ENCODE measurements at regions of chr16 and their contacts with region 1.

Region 1: GRCh38 chr16:22117609-22118008 is 25.3 kb downstream of the VWA3A start:
- DNase-seq: no peak
- H3K4me3 Mint-ChIP-seq: no peak overlapping the region
- H3K27ac Mint-ChIP-seq: no peak overlapping the region
- H3K4me1 Mint-ChIP-seq: no peaks in the 10 kb centered on the region
- H3K27me3 Mint-ChIP-seq: peaks cover 22% of the 10 kb centered on the region
- CTCF ChIP-seq: no peak

Region 2: DNA sequence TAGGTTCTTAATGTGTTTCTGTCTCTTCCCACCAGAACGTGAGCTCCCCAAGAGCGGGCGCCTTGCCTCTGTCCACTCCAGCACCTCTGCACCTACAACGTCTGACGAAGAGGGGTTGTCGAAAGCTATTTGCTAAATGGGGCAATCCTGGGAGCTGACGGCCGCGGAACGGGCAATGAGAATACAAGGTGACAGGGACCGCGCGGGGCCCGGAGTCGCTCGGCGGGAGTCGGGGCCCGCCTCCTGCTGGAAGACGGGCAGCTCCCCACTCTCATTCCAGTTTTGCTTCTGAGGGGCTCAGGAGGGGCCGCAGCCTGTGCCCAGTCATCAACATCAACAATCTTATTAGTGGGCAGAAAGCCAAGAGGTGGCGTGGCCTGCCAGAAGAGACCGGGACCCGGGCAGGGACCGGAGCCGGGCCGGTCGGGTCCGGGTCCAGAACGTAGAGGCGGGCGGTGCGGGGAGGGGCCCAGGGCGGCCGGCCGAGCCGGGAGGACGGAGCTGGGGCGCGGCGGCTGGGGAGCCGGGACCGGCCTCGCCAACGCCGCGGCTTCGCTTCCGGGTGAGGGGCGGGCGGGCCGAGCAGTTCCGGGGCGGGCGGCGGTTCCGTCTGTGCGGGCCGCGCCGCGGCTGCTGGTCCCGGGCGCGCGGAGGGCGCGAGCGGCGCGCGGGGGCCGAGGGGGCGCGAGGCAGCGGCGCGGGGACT is 109.9 kb before region 1 on chr16 and contains the start of gene MOSMO:
- CTCF ChIA-PET with region 1: no interaction called
- POLR2A ChIA-PET with region 1: no interaction called
- intact Hi-C with region 1: no loop called
- DNase-seq: peak; percentile 74
- H3K4me3 Mint-ChIP-seq: peak within 1 kb of the TSS; percentile 90
- H3K27ac Mint-ChIP-seq: peak within 1 kb of the TSS; percentile 70
- H3K4me1 Mint-ChIP-seq: peaks cover 26% of the 10 kb centered on the region
- H3K27me3 Mint-ChIP-seq: no peaks in the 10 kb centered on the region
- CTCF ChIP-seq: no peak
- total RNA-seq, gene MOSMO: 16.4 and 17.1 TPM in 2 replicates

Region 3: GRCh38 chr16:22151246-22151998 is 33.8 kb after region 1 on chr16:
- CTCF ChIA-PET with region 1: no interaction called
- POLR2A ChIA-PET with region 1: no interaction called
- intact Hi-C with region 1: loop called (anchors 5 kb)
- DNase-seq: no peak
- H3K4me3 Mint-ChIP-seq: no peak overlapping the region
- H3K27ac Mint-ChIP-seq: no peak overlapping the region
- H3K4me1 Mint-ChIP-seq: peaks cover 5% of the 10 kb centered on the region
- H3K27me3 Mint-ChIP-seq: peaks cover 25% of the 10 kb centered on the region
- CTCF ChIP-seq: no peak

Measured in MCF 10A (cell line).